ENCODE measurements at regions of chr7 and their contacts with region 1.

Region 1: GRCh38 chr7:75738987-75739795 is 450 bp upstream of the HIP1 start:
- DNase-seq: peak; percentile 100
- ATAC-seq: peak; percentile 97
- H3K4me3 Mint-ChIP-seq: peak overlapping the region; percentile 91
- H3K27ac Mint-ChIP-seq: peak overlapping the region; percentile 94
- H3K4me1 Mint-ChIP-seq: peaks cover 17% of the 10 kb centered on the region
- H3K27me3 Mint-ChIP-seq: peaks cover 11% of the 10 kb centered on the region

Region 2: DNA sequence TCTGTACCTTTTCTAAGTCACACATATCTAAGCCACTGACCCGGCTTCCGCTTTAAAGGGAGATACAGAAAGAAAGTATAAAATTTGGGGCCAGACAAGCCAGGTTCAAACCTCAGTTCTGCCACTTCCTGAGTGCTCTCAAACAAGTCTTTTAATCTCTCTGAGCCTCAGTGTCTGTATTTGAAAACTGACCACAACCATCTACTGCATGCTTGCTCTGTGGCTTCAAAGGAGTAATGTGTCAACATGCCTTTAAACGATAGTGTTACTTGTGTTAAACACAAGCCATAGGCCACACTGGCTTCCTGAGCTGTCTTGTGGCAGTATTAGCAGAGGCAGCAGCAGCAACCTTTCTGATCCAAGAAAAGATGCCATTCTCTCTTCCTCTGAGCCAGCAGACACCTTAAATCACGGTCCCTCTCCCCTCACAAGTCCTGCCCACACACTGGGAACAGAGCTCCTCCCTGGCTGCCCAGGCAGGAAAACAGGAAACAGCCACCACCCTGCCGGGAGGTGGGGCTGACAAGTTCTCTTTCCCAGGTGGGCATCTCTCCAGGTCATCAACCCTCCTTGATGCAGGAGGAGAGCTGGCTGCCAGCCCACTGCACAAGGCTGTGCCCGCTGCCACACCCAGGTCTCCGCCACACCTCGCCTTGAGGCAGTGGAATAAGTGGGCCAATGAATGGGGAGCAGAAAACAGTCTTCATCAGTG is 11.2 kb before region 1 on chr7:
- CTCF ChIA-PET with region 1: interaction called, 11 read pairs
- DNase-seq: peak; percentile 88
- ATAC-seq: peak; percentile 92
- H3K4me3 Mint-ChIP-seq: peak overlapping the region; percentile 57
- H3K27ac Mint-ChIP-seq: peak overlapping the region; percentile 89
- H3K4me1 Mint-ChIP-seq: peaks cover 34% of the 10 kb centered on the region
- H3K27me3 Mint-ChIP-seq: no peaks in the 10 kb centered on the region

Region 3: GRCh38 chr7:75772081-75773077 is 33.2 kb after region 1 on chr7 and contains the start of gene CCL26:
- CTCF ChIA-PET with region 1: no interaction called
- DNase-seq: no peak
- ATAC-seq: no peak
- H3K4me3 Mint-ChIP-seq: no peak within 1 kb of the TSS
- H3K27ac Mint-ChIP-seq: no peak within 1 kb of the TSS
- H3K4me1 Mint-ChIP-seq: peaks cover 21% of the 10 kb centered on the region
- H3K27me3 Mint-ChIP-seq: no peaks in the 10 kb centered on the region
- total RNA-seq, gene CCL26: not detected

Region 4: DNA sequence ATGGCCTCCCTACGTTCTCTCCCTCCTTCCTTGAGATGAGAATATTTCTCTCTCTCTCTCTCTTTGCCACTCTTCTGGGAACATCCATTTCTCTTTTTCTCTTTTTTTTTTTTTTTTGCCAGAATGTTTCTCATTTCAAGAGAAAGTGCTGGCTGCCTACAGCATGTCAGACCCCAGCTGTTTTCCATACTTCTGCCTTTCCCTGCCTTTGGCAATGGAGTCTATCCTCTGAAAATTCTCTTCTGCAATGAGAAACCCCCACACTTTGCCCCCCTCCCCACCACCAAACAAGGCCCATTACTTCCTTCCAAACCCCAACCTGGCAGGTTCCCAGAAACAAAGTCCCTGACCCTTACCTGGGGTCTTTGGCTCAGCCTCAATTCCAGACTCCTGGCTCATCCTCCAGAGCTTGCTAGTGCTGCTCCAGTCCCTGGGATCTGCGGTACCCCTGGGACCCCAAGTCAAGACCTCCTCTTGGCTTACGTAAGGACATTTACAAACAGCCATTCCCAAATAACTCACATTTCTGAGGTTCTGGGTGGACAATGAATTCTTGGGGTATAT is 50.3 kb after region 1 on chr7:
- CTCF ChIA-PET with region 1: no interaction called
- DNase-seq: no peak
- ATAC-seq: no peak
- H3K4me3 Mint-ChIP-seq: no peak overlapping the region
- H3K27ac Mint-ChIP-seq: no peak overlapping the region
- H3K4me1 Mint-ChIP-seq: no peaks in the 10 kb centered on the region
- H3K27me3 Mint-ChIP-seq: peaks cover 3% of the 10 kb centered on the region